AG04449 (cell line): ENCODE measurements at regions of chr1 and their contacts with region 1.

Region 1: DNA sequence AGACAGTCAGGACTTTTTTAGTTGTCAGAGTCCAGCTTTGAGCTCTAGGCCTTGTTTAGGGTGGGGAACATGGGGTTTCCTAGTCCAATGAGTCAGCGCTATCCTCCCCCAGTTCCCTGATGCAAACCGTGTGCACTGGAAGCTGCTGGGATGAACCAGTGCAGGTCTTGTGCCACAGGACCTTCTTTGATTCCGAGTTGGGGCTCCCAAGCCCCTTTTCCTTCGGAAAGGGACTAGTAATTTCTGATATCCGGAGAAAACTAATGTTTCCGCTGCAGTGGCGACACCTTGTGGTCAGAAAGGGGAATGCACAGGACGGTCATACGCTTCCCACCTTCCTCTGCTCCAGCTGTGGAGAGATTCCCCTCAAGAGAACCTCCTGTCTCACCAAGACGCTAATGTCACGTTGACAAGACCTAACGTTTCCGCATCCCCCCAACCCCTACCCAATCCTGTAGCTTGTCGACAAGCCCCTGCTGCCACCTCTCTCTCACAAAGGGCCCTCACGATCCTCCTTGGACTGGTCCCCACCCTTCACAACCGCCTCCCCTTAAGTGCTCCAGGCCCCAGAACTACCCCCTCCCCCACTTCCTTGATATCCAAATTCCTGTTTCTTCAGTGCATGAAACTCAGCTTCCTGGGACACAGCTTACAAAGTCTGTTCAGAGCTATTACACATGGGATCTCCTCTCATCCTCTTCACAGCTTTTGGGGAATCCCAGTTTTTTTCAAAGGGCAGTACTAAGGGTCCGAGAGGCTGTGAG is 30.9 kb downstream of the GPA33 start:
- DNase-seq: no peak
- H3K4me3 ChIP-seq: no peak overlapping the region
- CTCF ChIP-seq: peak; percentile 89

Region 2: GRCh38 chr1:165928075-165928731 is 1131.0 kb before region 1 on chr1:
- CTCF ChIA-PET with region 1: interaction called, 16 read pairs
- POLR2A ChIA-PET with region 1: no interaction called
- DNase-seq: no peak
- H3K4me3 ChIP-seq: no peak overlapping the region
- CTCF ChIP-seq: peak; percentile 72

Region 3: GRCh38 chr1:166479052-166479631 is 580.1 kb before region 1 on chr1:
- CTCF ChIA-PET with region 1: interaction called, 18 read pairs
- POLR2A ChIA-PET with region 1: no interaction called
- DNase-seq: no peak
- H3K4me3 ChIP-seq: no peak overlapping the region
- CTCF ChIP-seq: peak; percentile 67

Region 4: DNA sequence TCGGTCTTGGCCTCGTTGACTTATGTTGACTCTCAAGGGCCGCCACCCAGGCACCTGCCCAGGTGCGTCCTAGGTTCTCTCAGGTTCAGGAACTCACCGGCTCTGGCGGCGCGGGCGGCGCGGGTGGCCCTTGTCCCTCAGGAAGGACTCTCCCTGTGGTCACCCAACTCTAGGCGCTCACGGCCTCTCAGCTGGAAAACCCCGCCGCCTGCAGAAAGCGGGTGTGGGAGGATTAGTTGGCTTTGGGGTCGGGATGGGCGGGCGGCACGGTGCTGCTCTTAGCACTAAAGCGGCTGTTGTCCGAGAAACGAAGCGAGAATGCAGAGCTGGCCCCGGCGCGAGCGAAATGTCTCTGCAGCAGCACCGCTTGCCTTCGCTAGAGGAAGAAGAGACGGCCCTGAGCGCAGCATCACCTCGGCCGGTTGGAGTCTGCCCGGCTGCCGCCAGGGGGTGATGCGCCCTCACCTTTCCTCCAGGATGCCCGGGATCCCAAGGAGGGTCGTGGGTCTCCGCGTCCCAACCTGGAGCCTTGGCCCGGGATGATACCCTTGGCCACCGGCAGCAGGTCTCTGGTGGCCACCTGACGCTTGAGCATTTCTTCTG is 175.1 kb before region 1 on chr1:
- CTCF ChIA-PET with region 1: interaction called, 89 read pairs
- POLR2A ChIA-PET with region 1: no interaction called
- DNase-seq: no peak
- H3K4me3 ChIP-seq: no peak overlapping the region
- CTCF ChIP-seq: peak; percentile 63

Region 5: GRCh38 chr1:166910396-166910994 is 148.7 kb before region 1 on chr1:
- CTCF ChIA-PET with region 1: interaction called, 380 read pairs
- POLR2A ChIA-PET with region 1: no interaction called
- DNase-seq: peak; percentile 17
- H3K4me3 ChIP-seq: no peak overlapping the region
- CTCF ChIP-seq: peak; percentile 63

Region 6: GRCh38 chr1:167043752-167044488 is 15.3 kb before region 1 on chr1:
- CTCF ChIA-PET with region 1: interaction called, 16 read pairs
- POLR2A ChIA-PET with region 1: no interaction called
- DNase-seq: no peak
- H3K4me3 ChIP-seq: no peak overlapping the region
- CTCF ChIP-seq: no peak

Region 7: DNA sequence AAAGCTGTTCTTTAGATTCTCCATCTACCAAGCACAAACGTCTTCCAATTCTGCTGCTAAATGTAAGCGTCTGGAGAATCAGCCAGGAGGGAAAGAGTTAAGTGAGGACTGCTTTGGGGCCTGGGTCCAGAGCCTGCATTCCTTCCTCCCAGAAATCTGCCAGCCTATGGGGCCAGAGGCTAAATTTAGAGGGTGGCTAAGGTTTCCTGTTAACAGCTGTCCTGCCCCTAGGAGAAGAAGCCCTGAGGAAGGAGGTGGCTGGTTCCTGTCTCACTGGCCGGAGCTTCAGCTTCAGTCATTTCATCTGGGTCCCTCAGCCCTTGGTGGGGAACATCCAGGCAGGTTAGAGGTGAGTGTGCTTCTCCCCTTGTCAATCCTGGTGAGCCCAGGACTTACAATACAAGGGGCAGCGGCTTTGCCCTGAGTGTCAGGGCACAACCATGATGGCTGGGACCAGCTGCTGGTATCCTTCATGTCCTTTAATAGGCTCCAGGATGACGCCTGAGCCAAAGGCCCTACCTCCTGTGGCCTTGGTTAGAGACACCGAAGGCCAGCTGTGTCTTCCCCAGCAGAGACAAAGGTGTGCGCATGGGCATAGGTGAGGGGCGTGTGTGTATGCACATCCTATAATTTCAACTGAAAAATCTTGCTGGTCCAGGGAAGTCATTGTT is 34.8 kb after region 1 on chr1 and contains the start of gene STYXL2:
- CTCF ChIA-PET with region 1: interaction called, 10 read pairs
- POLR2A ChIA-PET with region 1: no interaction called
- DNase-seq: no peak
- H3K4me3 ChIP-seq: no peak within 1 kb of the TSS
- CTCF ChIP-seq: no peak

Region 8: DNA sequence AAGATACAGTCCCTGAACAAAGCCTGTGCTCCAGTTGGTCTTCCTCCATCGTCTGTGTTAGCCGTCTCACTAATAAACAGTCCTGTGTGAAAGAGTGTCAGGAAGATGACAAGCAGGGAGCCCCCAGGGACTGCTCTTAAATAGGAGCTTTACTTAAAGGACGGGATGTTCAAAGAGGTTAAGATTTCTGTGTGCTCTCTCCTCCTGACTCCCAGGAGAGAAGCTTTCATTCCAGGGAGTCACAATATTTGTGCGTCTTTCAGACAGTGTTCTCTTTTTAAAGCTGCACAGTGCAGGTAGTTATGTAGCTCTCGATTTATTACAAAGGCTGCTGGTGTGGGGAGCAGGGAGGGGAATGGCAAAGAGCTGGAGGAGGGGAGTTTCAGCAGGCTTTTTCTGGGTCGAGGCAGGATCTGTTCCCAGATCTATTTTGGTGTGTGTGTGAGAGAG is 78.1 kb after region 1 on chr1:
- CTCF ChIA-PET with region 1: no interaction called
- POLR2A ChIA-PET with region 1: no interaction called
- DNase-seq: no peak
- H3K4me3 ChIP-seq: no peak overlapping the region
- CTCF ChIP-seq: no peak